Ovary (tissue), 10 donors: ENCODE measurements at regions of chr12 and their contacts with region 1.

Region 1: DNA sequence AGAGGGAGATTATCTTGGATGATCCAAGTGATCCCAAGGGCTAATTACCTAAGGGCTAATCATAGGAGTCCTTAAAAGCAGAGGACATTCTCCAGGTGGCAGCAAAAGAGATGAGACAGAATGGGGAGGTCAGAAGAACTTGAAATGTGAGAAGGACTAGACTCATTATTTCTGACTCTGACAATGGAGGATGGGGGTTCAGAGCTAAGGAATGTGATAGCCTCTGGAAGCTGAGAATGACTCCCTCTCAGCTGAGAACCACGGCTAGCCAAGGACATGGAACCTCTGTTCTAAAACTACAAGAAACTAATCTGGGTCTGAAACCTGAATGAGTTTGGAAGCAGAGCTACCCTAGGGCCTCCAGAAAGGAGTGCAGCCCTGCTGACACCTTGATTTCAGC is 35.6 kb upstream of the ANKS1B start:
- DNase-seq: no peak
- H3K4me3 ChIP-seq: no peak overlapping the region
- H3K27ac ChIP-seq: no peak overlapping the region
- H3K4me1 ChIP-seq: no peaks in the 10 kb centered on the region
- H3K27me3 ChIP-seq: no peaks in the 10 kb centered on the region
- CTCF ChIP-seq: no peak
- EP300 ChIP-seq: no peak
- POLR2A ChIP-seq: no peak

Region 2: DNA sequence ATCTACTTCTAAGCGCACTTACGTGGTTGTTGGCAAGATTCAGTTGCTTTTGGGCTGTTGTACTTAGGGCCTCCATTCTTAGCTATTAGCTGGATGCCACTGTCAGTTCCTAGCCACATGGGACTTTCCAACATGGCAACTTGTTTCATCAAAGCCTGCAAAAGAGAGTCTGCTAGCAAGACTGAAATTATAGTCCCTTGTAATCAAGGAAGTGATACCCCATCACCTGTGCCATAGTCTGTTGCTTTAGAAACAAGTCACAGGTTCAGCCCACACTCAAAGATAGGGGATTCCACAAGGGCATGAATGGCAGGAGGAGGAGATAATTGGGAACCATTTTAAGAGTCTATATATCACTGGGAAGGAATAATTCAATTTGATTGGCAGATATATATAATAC is 309.4 kb after region 1 on chr12:
- intact Hi-C with region 1: no loop called
- DNase-seq: no peak
- H3K4me3 ChIP-seq: no peak overlapping the region
- H3K27ac ChIP-seq: no peak overlapping the region
- H3K4me1 ChIP-seq: no peaks in the 10 kb centered on the region
- H3K27me3 ChIP-seq: no peaks in the 10 kb centered on the region
- CTCF ChIP-seq: no peak
- EP300 ChIP-seq: no peak
- POLR2A ChIP-seq: no peak

Region 3: DNA sequence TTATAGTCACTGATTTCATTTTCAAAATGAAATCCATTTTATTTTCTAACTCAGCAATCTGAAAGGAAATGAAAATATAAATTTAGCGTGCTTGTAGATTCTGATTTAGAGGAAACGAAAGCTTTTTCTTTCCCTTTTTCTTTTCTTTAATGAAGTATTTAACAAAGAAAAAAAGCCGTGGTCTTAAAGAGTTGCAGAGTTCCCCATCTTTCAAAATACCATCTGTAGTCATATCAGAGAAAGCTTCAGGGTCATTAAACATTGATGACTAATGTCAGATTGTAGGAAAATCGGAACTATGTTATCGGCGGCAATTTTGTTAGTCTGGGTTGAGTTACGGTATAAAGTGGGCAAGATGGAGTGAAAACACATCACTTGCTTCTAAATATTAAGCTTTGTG is 1889.3 kb after region 1 on chr12:
- intact Hi-C with region 1: loop called in 1 of 4 experiments (anchors 10 kb)
- DNase-seq: no peak
- H3K4me3 ChIP-seq: no peak overlapping the region
- H3K27ac ChIP-seq: peak overlapping the region in 1 of 2 donors; percentile 20
- H3K4me1 ChIP-seq: no peaks in the 10 kb centered on the region
- H3K27me3 ChIP-seq: no peaks in the 10 kb centered on the region
- CTCF ChIP-seq: no peak
- EP300 ChIP-seq: no peak
- POLR2A ChIP-seq: no peak